ENCODE measurements at regions of chr17 and their contacts with region 1.

Region 1: DNA sequence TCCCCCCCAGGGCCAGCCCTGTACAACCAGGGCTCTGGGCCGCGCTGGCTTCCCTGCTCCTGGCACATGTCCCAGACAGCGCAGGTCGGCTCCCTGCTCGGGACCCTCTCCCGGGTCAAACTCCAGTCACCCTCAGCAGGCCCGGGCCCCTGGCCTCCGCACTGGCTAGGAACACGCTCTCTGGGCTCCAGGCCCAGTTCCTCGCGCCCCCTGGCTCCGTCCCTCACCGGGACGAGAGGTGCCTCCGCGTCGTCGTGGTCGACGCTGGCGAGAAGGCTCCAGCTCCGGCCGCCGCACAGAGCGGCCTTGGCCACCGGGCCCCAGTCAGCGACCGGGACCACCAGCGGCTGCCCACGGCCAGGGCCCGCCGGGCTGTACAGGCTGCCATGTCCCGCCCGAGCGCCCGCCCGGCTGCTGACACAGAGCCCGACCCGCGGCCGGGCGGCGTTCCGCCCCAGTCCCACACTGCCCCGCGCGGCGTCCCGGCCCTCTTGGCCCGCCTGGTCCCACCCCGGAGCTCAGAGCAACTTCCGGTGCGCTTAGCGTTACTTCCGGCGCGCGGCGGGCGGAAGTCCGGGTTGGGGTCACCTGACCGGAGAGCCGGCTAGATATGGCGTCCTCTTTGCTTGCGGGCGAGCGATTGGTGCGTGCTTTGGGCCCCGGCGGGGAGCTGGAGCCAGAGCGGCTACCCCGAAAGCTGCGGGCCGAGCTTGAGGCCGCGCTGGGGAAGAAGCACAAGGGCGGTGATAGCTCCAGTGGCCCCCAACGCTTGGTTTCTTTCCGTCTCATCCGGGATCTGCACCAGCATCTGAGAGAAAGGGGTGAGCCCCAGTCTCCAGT is at the start of gene POLDIP2:
- DNase-seq: peak; percentile 97
- H3K4me3 Mint-ChIP-seq: peak within 1 kb of the TSS; percentile 95
- H3K27ac Mint-ChIP-seq: peak within 1 kb of the TSS; percentile 92
- H3K4me1 Mint-ChIP-seq: peaks cover 32% of the 10 kb centered on the region
- H3K27me3 Mint-ChIP-seq: no peaks in the 10 kb centered on the region
- total RNA-seq, gene POLDIP2: 110 and 114 TPM in 2 replicates

Region 2: DNA sequence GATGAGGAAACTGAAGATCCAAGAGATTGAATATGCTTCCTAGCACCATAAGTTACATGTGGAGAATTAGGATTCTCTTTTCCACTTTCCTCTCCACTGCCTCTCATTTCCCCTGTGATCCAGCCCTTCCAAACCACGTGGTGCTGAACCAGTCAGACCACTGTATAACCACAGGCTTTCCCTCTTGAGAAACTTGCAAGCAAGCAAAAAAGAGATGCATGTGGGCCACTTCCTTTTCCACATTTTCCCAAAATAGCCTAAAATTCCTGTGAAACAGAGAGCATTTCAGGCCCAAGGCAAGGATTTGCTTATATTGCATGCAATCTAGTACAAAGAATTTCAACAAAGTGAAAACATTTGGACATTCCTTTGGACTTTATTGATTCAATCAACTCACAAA is 960.3 kb before region 1 on chr17:
- intact Hi-C with region 1: no loop called
- DNase-seq: no peak
- H3K4me3 Mint-ChIP-seq: no peak overlapping the region
- H3K27ac Mint-ChIP-seq: no peak overlapping the region
- H3K4me1 Mint-ChIP-seq: no peaks in the 10 kb centered on the region
- H3K27me3 Mint-ChIP-seq: peaks cover 44% of the 10 kb centered on the region

Region 3: DNA sequence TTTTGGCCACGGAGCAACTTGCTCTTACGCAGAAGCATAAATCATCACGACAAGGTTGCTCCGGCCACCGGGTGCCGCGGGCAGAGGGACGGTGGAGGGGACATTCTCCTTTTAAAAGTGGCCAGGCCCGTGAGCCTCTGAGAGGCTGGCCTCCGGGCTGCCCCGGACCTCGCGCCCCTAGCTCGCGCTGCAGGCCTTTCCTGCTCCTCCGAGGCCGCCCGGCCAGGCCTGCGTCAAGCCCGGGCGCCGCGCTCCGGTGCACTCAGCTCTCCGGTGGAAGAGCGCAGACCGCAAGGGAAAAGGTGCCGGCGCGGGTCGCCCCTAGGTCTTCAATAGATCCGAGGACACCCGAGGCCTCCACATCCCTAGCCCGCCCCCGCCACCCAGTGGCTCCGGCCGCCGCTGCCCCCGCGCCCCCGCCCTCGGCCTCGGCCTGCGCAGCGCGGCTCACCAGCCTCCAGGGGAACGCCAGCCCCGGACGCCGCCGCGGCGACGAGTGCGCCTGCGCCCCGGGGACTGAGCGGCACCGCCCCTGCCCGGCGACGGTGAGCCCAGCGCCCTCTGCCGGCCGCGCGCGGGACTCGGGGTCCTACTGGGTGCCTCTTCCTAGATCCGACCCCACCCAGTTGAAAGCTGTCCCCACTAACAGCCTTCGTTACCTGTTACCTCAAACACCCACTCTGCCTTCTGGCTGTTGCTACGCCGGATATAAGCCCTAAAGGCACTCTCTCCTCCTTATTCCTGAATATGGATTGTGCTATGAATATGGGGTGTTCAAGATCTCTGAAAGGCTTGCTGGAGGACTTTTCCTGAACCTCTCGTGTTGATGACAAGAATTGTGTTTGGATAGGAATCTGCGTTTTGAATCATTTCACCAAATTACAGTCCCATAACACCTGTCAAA is 464.2 kb before region 1 on chr17 and contains the start of gene LYRM9:
- intact Hi-C with region 1: loop called (anchors 1 kb)
- DNase-seq: peak; percentile 92
- H3K4me3 Mint-ChIP-seq: peak within 1 kb of the TSS; percentile 85
- H3K27ac Mint-ChIP-seq: peak within 1 kb of the TSS; percentile 85
- H3K4me1 Mint-ChIP-seq: peaks cover 29% of the 10 kb centered on the region
- H3K27me3 Mint-ChIP-seq: peaks cover 40% of the 10 kb centered on the region
- total RNA-seq, gene LYRM9: 1.9 and 2.9 TPM in 2 replicates

Region 4: DNA sequence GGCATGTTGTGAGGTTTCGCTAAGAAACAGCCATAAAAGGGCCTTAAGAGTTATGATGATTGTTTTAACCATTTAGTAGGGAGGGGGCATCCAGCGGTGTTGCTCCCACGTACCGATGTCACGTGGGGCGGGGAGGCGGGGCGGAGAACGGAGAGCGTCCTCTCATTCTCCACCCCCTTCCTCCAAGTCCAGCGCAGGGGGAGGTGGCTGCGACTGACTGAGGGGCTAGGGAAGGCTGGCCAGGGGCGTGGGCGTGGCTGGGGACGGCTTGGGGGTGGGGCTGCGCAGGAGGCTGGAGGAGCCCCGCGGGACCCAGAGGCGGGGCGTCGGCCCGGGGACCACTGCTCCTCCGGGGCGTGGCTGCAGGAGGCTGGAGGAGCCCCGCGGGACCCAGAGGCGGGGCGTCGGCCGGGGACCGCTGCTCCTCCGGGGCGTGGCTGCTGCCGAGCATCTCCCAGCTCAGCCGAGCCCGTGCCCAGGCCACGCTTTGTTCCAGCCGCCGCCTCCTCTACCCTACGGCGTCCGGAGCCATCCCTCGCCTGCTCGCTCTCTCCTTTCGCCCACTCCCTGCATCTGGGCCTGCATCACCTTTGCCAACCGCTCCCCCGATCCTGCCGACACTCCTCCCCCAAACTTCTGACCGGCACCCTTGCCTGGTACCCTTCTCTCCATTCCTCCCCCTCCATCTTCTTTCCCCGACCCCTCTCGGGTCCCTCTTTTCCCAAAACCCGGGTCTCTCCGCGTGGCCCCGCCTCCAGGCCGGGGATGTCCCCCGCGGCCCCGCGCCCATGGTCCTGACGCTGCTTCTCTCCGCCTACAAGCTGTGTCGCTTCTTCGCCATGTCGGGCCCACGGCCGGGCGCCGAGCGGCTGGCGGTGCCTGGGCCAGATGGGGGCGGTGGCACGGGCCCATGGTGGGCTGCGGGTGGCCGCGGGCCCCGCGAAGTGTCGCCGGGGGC is 14.2 kb after region 1 on chr17 and contains the start of gene SARM1:
- intact Hi-C with region 1: loop called (anchors 1 kb)
- DNase-seq: peak; percentile 85
- H3K4me3 Mint-ChIP-seq: peak within 1 kb of the TSS; percentile 95
- H3K27ac Mint-ChIP-seq: peak within 1 kb of the TSS; percentile 98
- H3K4me1 Mint-ChIP-seq: peaks cover 14% of the 10 kb centered on the region
- H3K27me3 Mint-ChIP-seq: no peaks in the 10 kb centered on the region
- total RNA-seq, gene SARM1: 40.7 and 45.6 TPM in 2 replicates

Region 5: GRCh38 chr17:28384281-28385036 is 27.2 kb after region 1 on chr17:
- intact Hi-C with region 1: loop called (anchors 1 kb)
- DNase-seq: peak; percentile 61
- H3K4me3 Mint-ChIP-seq: peak overlapping the region; percentile 84
- H3K27ac Mint-ChIP-seq: peak overlapping the region; percentile 89
- H3K4me1 Mint-ChIP-seq: peaks cover 40% of the 10 kb centered on the region
- H3K27me3 Mint-ChIP-seq: peaks cover 1% of the 10 kb centered on the region

Region 6: DNA sequence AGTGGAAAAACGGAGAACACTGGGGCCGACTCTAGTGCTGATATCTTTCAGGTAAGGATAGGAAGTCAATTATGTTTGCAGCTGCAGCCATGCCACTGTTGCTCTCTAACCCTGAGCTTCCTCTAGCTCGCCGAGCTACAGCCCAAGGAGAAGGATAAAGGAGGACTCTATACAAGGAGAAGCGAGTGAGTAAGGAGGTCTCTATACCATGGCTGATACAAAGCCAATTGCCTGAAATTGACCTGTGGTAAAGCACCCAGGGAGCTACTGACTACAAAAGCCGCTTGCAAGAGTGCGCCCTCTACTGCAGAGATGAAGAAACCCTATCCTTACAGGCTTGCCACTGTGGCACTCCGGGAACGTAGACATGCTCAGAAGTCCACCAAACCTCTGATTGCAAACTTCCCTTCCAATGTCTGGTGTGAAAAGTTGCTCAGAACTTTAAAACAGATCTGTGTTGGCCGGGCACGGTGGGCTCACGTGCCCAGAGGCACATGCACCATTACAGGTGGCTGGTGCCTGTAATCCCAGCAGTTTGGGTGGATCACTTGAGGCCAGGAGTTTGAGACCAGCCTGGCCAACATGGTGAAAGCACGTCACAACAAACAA is 59.5 kb after region 1 on chr17:
- intact Hi-C with region 1: loop called (anchors 2 kb)
- DNase-seq: peak; percentile 33
- H3K4me3 Mint-ChIP-seq: no peak overlapping the region
- H3K27ac Mint-ChIP-seq: no peak overlapping the region
- H3K4me1 Mint-ChIP-seq: no peaks in the 10 kb centered on the region
- H3K27me3 Mint-ChIP-seq: peaks cover 27% of the 10 kb centered on the region